Right lobe of liver (tissue), 6 donors: ENCODE measurements at regions of chr14 and their contacts with region 1.

Region 1: DNA sequence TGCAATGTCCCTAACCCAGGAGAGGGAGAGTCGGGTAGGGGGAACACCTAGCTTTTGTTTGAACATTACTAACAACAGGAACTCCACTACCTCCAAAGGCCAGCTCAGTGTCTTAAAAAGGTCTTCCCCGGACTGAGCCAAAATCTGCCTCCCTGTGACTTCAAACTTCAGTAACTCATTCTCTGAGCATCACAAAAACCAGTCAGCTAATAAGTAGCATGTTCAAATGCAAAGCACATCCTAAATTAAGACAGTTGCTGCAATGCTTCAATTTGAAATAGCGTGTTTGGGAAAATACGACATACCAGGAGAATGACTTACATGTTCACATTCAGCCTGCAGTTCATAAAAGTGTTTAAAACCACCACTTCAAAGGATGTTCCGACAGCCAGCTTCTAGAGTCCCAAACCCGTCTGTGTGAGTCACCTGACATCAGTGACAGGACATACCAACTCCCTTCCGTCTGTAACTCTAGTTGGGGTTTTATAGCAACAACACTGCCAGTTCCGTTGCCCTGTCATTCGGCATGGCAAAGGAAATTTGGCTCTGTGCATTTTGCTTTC is 13.0 kb downstream of the ZFP36L1 start:
- DNase-seq: peak in 1 of 3 donors; percentile 38
- ATAC-seq: no peak
- H3K4me3 ChIP-seq: no peak overlapping the region
- H3K27ac ChIP-seq: peak overlapping the region in 2 of 3 donors; percentile 56 to 66
- H3K4me1 ChIP-seq: peaks cover 0 to 49% (median 10%) of the 10 kb centered on the region in 4 donors
- H3K27me3 ChIP-seq: no peaks in the 10 kb centered on the region
- CTCF ChIP-seq: no peak
- POLR2A ChIP-seq: no peak

Region 2: DNA sequence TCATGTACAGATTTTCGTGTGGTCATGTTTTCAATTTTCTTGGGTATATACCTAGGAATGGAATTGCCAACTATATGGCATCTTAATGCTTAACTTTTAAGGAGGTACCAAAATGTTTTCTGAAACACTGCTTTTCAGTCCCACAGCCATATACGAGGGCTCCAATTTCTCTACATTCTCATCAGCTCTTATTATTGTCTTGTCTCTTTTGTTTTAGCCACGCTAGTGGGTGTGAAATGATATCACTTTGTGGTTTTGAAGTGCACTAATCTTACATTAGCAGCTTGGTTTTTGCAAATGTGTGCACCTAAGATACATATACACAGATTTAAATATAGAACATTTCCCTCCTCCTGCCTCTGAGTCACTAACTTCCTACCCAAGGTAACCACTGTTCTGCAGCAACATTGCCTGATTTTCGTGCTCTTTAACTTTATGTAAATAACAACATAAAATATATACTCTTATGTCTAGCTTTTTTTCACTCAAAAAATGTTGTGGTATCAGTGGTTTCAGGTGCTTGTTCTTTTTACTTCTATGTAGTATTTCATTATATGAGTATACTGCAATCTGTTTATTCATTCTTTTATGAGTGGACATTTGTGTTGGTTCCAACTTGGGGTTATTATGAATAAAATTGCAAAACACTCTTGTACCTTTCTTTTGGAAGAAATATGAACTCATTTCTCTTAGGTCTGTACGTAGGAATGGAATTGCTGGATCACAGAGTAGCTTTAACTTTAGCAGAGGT is 60.0 kb before region 1 on chr14:
- intact Hi-C with region 1: loop called in 1 of 2 experiments (anchors 10 kb)
- DNase-seq: no peak
- ATAC-seq: no peak
- H3K4me3 ChIP-seq: no peak overlapping the region
- H3K27ac ChIP-seq: no peak overlapping the region
- H3K4me1 ChIP-seq: peaks cover 0 to 28% (median 5%) of the 10 kb centered on the region in 4 donors
- H3K27me3 ChIP-seq: no peaks in the 10 kb centered on the region
- CTCF ChIP-seq: no peak
- POLR2A ChIP-seq: no peak

Region 3: DNA sequence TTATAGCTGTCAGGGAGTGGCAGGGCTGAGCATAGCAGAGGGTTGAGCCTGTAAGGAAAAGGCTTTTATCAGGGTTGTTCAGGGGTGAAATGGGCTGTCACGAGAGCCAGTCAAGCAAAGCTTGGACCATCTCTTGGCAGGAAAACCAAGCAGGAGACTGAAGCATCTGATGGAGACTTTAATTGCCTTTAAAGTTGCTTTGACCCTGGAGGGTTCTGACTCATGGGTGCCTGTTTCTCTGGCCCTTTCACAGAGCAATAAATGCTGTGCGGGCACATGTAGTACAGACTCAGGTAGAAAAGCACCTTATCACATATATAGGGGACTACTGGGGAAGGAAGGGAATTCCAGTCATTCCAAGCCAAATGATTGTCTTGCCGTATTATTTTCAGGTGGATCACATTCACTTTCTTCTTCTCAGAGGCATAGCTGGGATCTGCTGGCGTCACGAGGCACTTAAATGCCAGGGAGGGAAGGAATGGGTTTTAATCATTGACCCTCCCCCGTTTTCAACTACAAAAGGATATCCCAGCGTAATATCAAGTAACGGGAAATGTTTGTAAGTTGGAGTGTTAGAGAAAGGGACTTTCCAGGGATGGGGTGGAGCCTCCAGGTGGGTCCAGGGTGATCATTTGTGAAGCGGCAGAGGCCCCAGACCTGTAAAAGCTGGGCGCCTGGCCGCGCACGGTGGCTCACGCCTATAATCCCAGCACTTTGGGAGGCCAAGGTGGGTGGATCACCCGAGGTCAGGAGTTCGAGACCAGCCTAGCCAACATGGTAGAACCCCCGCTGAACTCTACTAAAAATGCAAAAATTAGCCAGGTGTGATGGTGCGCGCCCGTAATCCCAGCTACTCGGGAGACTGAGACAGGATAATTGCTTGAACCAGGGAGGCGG is 739.6 kb after region 1 on chr14:
- intact Hi-C with region 1: no loop called
- DNase-seq: peak in 1 of 3 donors; percentile 15
- ATAC-seq: no peak
- H3K4me3 ChIP-seq: no peak overlapping the region
- H3K27ac ChIP-seq: no peak overlapping the region
- H3K4me1 ChIP-seq: no peaks in the 10 kb centered on the region
- H3K27me3 ChIP-seq: no peaks in the 10 kb centered on the region
- CTCF ChIP-seq: no peak
- POLR2A ChIP-seq: no peak